ENCODE measurements at regions of chr17 and their contacts with region 1.

Region 1: GRCh38 chr17:76072148-76072858 is at the start of gene SRP68:
- DNase-seq: peak; percentile 90
- ATAC-seq: peak; percentile 79
- H3K4me3 Mint-ChIP-seq: peak within 1 kb of the TSS; percentile 94
- H3K27ac Mint-ChIP-seq: peak within 1 kb of the TSS; percentile 100
- H3K4me1 Mint-ChIP-seq: peaks cover 44% of the 10 kb centered on the region
- H3K27me3 Mint-ChIP-seq: peaks cover 28% of the 10 kb centered on the region
- total RNA-seq, gene SRP68: 151 to 174 TPM

Region 2: GRCh38 chr17:75430159-75430974 is 641.9 kb before region 1 on chr17:
- CTCF ChIA-PET with region 1: no interaction called
- POLR2A ChIA-PET with region 1: no interaction called
- intact Hi-C with region 1: no loop called
- DNase-seq: no peak
- ATAC-seq: no peak
- H3K4me3 Mint-ChIP-seq: no peak overlapping the region
- H3K27ac Mint-ChIP-seq: no peak overlapping the region
- H3K4me1 Mint-ChIP-seq: peaks cover 16% of the 10 kb centered on the region
- H3K27me3 Mint-ChIP-seq: peaks cover 5% of the 10 kb centered on the region

Region 3: DNA sequence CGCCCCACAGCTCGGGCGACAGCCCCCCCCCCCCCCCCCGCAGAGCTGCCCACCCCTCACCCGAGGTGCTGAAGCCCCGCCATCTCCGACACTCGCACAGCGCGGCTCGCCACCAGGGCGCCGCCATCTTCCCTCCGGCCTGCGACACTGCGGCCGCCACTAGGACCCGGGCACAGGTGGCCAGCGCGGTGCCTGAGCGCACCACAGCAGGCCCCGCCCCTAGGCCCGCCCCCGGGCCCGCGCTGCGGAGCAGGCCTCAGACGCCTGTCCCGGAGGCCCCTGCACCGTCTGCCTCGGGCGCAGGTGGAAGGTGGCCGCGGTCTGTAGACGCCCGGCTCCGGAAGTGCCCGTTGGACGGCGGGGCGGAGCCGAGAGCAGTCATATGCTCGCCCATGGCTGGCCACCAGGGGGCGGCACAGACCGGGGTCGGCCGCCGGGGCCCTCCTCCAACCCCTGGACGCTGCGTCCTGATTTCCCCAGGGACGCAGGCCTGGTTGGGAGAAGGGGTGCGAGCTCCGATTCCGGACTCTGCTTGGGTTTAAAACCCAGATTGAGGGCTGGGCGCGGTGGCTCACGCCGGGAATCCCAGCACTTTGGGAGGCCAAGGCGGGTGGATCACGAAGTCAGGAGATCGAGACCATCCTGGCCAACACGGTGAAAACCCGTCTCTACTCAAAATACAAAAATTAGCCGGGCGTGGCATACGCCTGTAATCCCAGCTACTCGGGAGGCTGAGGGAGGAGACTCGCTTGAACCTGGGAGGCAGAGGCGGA is 167.4 kb before region 1 on chr17 and contains the start of gene MRPL38:
- CTCF ChIA-PET with region 1: no interaction called
- POLR2A ChIA-PET with region 1: no interaction called
- intact Hi-C with region 1: loop called in 1 of 2 experiments (anchors 1 kb)
- DNase-seq: peak; percentile 97
- ATAC-seq: peak; percentile 99
- H3K4me3 Mint-ChIP-seq: peak within 1 kb of the TSS; percentile 86
- H3K27ac Mint-ChIP-seq: peak within 1 kb of the TSS; percentile 89
- H3K4me1 Mint-ChIP-seq: peaks cover 5% of the 10 kb centered on the region
- H3K27me3 Mint-ChIP-seq: no peaks in the 10 kb centered on the region
- total RNA-seq, gene MRPL38: 98.0 to 115 TPM

Region 4: GRCh38 chr17:76053246-76054116 is 18.8 kb before region 1 on chr17:
- CTCF ChIA-PET with region 1: interaction called, 3 read pairs
- POLR2A ChIA-PET with region 1: no interaction called
- intact Hi-C with region 1: loop called in 1 of 2 experiments (anchors 2 kb)
- DNase-seq: peak; percentile 62
- ATAC-seq: peak; percentile 74
- H3K4me3 Mint-ChIP-seq: no peak overlapping the region
- H3K27ac Mint-ChIP-seq: peak overlapping the region; percentile 38
- H3K4me1 Mint-ChIP-seq: peaks cover 41% of the 10 kb centered on the region
- H3K27me3 Mint-ChIP-seq: no peaks in the 10 kb centered on the region

Region 5: DNA sequence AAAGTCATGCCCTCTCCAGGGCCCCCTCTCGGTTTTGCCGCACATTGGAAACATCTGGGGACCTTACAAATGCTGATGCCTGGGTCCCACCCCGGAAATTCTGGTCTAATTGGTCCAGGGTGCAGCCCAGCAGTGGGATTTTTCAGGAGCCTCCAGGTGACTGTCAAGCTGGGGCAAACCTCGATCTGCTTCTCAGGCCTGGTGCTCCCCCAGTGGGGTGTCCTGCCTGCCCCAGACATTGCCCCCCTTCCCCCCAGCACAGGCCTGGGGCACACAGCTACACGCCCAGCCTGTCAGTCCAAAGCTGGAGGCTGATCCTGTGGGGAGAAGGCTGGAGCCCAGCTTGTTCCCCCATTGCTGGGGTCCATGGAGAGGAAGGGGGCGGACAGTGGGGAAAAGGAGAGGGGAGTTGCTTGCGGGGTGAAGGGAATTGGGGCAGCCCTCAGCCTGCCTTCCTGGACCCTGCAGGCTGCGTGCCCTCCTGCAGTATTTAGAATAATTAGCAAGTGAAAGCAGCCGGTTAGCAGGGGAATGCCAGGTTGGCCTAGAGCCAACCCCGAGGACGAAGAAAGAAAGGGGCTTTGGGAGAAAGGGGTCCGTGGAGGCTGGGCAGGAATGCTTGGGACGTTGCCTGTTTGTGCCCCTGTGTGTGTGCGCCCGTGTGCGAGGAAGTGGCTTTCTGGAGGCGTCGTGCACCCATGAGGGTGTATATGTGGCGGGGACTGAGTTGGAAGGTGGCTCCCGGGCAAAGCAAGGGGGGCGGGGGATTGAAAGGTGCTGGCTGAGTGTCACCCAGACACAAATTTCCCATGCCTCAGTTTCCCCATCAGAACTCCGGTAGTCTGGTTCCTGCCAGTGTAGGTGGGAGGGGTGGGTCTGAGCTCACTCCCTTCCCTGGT is 62.9 kb after region 1 on chr17:
- CTCF ChIA-PET with region 1: no interaction called
- POLR2A ChIA-PET with region 1: no interaction called
- intact Hi-C with region 1: no loop called
- DNase-seq: no peak
- ATAC-seq: no peak
- H3K4me3 Mint-ChIP-seq: no peak overlapping the region
- H3K27ac Mint-ChIP-seq: no peak overlapping the region
- H3K4me1 Mint-ChIP-seq: peaks cover 13% of the 10 kb centered on the region
- H3K27me3 Mint-ChIP-seq: peaks cover 6% of the 10 kb centered on the region

Region 6: GRCh38 chr17:76166168-76166567 is 93.9 kb after region 1 on chr17:
- CTCF ChIA-PET with region 1: no interaction called
- POLR2A ChIA-PET with region 1: no interaction called
- intact Hi-C with region 1: no loop called
- DNase-seq: peak; percentile 68
- ATAC-seq: peak; percentile 93
- H3K4me3 Mint-ChIP-seq: no peak overlapping the region
- H3K27ac Mint-ChIP-seq: peak overlapping the region; percentile 66
- H3K4me1 Mint-ChIP-seq: peaks cover 18% of the 10 kb centered on the region
- H3K27me3 Mint-ChIP-seq: no peaks in the 10 kb centered on the region

Region 7: DNA sequence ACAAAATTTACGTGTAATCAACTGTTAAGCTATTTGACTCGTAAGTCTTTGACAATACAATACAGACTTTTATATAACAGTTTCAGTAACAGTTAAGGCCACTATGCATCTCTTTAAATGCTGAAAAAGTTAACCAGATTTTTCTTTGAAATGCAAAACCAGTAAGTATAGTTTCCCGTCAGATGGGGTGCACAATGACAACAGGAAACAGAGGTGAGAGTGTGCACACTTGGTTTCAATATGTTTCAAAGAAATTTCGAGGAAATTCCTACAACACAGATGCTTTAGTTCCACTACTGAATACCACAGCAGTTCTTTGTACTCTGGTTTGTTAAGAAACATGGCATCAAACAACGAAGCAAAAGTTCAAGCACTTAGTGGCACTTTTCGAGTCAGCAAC is 119.6 kb after region 1 on chr17:
- CTCF ChIA-PET with region 1: interaction called, 3 read pairs
- POLR2A ChIA-PET with region 1: interaction called, 10 read pairs
- intact Hi-C with region 1: loop called in 1 of 2 experiments (anchors 1 kb)
- DNase-seq: peak; percentile 63
- ATAC-seq: peak; percentile 79
- H3K4me3 Mint-ChIP-seq: peak overlapping the region; percentile 61
- H3K27ac Mint-ChIP-seq: peak overlapping the region; percentile 96
- H3K4me1 Mint-ChIP-seq: peaks cover 80% of the 10 kb centered on the region
- H3K27me3 Mint-ChIP-seq: no peaks in the 10 kb centered on the region

Region 8: GRCh38 chr17:76353599-76354316 is 281.5 kb after region 1 on chr17 and contains the start of gene PRPSAP1:
- CTCF ChIA-PET with region 1: no interaction called
- POLR2A ChIA-PET with region 1: no interaction called
- intact Hi-C with region 1: loop called in 1 of 2 experiments (anchors 2 kb)
- DNase-seq: peak; percentile 88
- ATAC-seq: peak; percentile 97
- H3K4me3 Mint-ChIP-seq: peak within 1 kb of the TSS; percentile 78
- H3K27ac Mint-ChIP-seq: peak within 1 kb of the TSS; percentile 96
- H3K4me1 Mint-ChIP-seq: peaks cover 18% of the 10 kb centered on the region
- H3K27me3 Mint-ChIP-seq: no peaks in the 10 kb centered on the region
- total RNA-seq, gene PRPSAP1: 26.7 to 34.9 TPM

Region 9: DNA sequence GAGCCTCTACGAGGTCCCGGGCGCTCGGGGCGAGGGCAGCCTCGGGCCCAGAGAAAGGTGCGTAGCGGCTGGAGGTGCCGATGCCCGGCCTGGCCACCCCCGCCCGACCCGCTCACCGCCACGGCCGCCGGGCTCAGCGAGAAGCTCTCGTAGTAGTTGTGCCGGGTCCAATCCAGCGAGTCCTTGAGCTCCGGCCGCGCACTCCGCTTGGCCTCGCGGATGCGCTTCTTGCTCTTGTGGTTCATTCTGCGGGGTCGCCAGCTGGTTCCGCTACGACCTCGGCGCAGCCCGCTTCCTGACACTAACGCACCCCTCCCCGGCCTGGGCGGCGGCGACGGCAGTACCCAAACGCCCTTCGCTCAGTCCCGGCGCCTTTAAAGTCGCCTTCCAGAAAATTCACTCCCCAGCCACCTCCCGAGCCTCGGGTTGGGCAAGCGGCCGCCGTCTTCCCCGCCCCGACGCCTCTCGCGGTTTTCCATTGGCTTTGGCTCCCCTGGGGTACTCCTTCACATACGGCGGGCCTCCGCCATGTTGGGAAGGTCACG is 654.0 kb after region 1 on chr17 and contains the start of gene JMJD6:
- CTCF ChIA-PET with region 1: no interaction called
- POLR2A ChIA-PET with region 1: interaction called, 3 read pairs
- intact Hi-C with region 1: loop called in 1 of 2 experiments (anchors 5 kb)
- DNase-seq: peak; percentile 97
- ATAC-seq: peak; percentile 87
- H3K4me3 Mint-ChIP-seq: peak within 1 kb of the TSS; percentile 97
- H3K27ac Mint-ChIP-seq: peak within 1 kb of the TSS; percentile 98
- H3K4me1 Mint-ChIP-seq: peaks cover 54% of the 10 kb centered on the region
- H3K27me3 Mint-ChIP-seq: no peaks in the 10 kb centered on the region
- total RNA-seq, gene JMJD6: 51.3 to 65.5 TPM